HCT116 (cell line): ENCODE measurements at regions of chr12 and their contacts with region 1.

Region 1: GRCh38 chr12:76031537-76032073 is at the start of gene PHLDA1:
- DNase-seq: peak; percentile 77
- ATAC-seq: peak; percentile 70
- H3K4me3 ChIP-seq: peak within 1 kb of the TSS; percentile 75
- H3K27ac ChIP-seq: peak within 1 kb of the TSS; percentile 88
- H3K4me1 ChIP-seq: peaks cover 23 to 59% of the 10 kb centered on the region in 2 experiments
- H3K27me3 ChIP-seq: no peaks in the 10 kb centered on the region
- CTCF ChIP-seq: peak in 1 of 3 experiments; percentile 22; a peak in 1 of 6 replicates
- POLR2A ChIP-seq: peak; percentile 67
- RAD21 ChIP-seq: no peak; the same call in 1 of the 2 replicates
- total RNA-seq, gene PHLDA1: 231 TPM

Region 2: GRCh38 chr12:75766263-75767160 is 265.1 kb before region 1 on chr12:
- CTCF ChIA-PET with region 1: no interaction called
- POLR2A ChIA-PET with region 1: interaction called, 5 read pairs
- RAD21 ChIA-PET with region 1: no interaction called
- intact Hi-C with region 1: loop called (anchors 5 kb)
- DNase-seq: peak; percentile 88
- ATAC-seq: peak; percentile 77
- H3K4me3 ChIP-seq: no peak overlapping the region
- H3K27ac ChIP-seq: peak overlapping the region; percentile 100
- H3K4me1 ChIP-seq: peaks cover 72 to 86% of the 10 kb centered on the region in 2 experiments
- H3K27me3 ChIP-seq: no peaks in the 10 kb centered on the region
- CTCF ChIP-seq: no peak
- POLR2A ChIP-seq: no peak
- RAD21 ChIP-seq: peak; percentile 51

Region 3: GRCh38 chr12:75837700-75838099 is 193.9 kb before region 1 on chr12:
- CTCF ChIA-PET with region 1: no interaction called
- POLR2A ChIA-PET with region 1: no interaction called
- RAD21 ChIA-PET with region 1: no interaction called
- intact Hi-C with region 1: no loop called
- DNase-seq: no peak
- ATAC-seq: no peak
- H3K4me3 ChIP-seq: no peak overlapping the region
- H3K27ac ChIP-seq: no peak overlapping the region
- H3K4me1 ChIP-seq: peaks cover 14 to 17% of the 10 kb centered on the region in 2 experiments
- H3K27me3 ChIP-seq: no peaks in the 10 kb centered on the region
- CTCF ChIP-seq: no peak
- POLR2A ChIP-seq: no peak
- RAD21 ChIP-seq: no peak

Region 4: DNA sequence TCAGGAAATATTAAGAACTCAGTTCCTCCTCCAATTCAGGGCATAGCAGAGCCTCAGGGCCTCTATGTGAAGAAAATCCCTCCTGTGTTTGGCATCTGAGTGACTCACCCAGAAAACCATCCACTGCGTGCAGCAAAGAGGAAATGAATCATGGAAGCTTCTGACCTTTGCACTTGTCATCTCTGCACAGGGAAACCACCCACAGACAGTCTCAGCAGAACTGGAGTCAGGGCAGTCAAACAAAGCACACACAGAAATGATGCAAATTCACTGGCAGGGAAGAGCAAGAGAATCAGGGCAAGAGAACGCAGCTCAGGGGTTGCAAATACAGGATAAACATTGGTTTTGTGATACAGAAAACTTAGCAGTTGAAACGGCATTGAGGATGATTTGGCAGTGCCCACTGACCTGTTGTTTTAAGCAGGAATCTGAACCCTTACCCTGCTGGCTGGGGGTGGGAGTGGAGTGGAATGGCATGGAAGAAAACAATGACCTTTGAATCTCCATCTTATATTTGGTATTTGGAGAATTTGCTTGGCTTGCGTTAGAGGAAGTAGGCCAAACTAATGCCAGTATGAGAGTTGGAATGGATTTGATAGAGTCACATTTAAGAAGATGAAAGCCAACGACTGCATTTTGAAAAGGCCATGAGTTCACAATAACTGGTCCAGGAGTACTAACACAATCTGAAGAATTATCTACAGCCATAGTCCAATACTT is 53.5 kb before region 1 on chr12:
- CTCF ChIA-PET with region 1: no interaction called
- POLR2A ChIA-PET with region 1: interaction called, 23 read pairs
- RAD21 ChIA-PET with region 1: no interaction called
- intact Hi-C with region 1: no loop called
- DNase-seq: peak; percentile 94
- ATAC-seq: peak; percentile 80
- H3K4me3 ChIP-seq: no peak overlapping the region
- H3K27ac ChIP-seq: peak overlapping the region; percentile 98
- H3K4me1 ChIP-seq: peaks cover 70 to 89% of the 10 kb centered on the region in 2 experiments
- H3K27me3 ChIP-seq: no peaks in the 10 kb centered on the region
- CTCF ChIP-seq: 0 out of 6 replicates have a peak, but pooled peaks of 1 of the 3 experiments have one; percentile 3
- POLR2A ChIP-seq: no peak
- RAD21 ChIP-seq: peak; percentile 38

Region 5: DNA sequence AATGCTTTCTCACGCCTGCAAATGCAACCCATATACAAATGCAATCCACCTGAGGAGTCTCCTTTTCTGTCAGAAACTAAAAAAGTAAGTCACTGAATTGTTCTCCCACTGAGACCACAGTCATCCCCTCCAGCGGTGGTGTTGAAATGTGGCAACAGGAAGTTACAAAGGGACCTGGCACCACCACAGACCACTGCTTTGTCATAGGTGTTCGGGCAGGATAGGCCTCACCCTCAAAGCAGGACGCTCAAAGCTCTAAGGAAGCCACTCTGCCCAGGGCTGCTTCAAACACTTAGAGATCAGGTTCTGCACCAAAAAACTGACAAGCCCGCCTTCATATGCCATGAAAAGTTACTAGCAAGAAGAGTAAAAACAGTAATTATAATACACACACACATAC is 11.3 kb before region 1 on chr12:
- CTCF ChIA-PET with region 1: no interaction called
- POLR2A ChIA-PET with region 1: no interaction called
- RAD21 ChIA-PET with region 1: no interaction called
- intact Hi-C with region 1: no loop called
- DNase-seq: peak; percentile 81
- ATAC-seq: peak; percentile 72
- H3K4me3 ChIP-seq: no peak overlapping the region
- H3K27ac ChIP-seq: peak overlapping the region; percentile 88
- H3K4me1 ChIP-seq: peaks cover 55 to 87% of the 10 kb centered on the region in 2 experiments
- H3K27me3 ChIP-seq: no peaks in the 10 kb centered on the region
- CTCF ChIP-seq: no peak
- POLR2A ChIP-seq: no peak
- RAD21 ChIP-seq: peak; percentile 13; the same call in 1 of the 2 replicates

Region 6: GRCh38 chr12:76480796-76481195 is 449.2 kb after region 1 on chr12:
- CTCF ChIA-PET with region 1: no interaction called
- POLR2A ChIA-PET with region 1: no interaction called
- RAD21 ChIA-PET with region 1: no interaction called
- intact Hi-C with region 1: no loop called
- DNase-seq: no peak
- ATAC-seq: no peak
- H3K4me3 ChIP-seq: no peak overlapping the region
- H3K27ac ChIP-seq: no peak overlapping the region
- H3K4me1 ChIP-seq: no peaks in the 10 kb centered on the region
- H3K27me3 ChIP-seq: no peaks in the 10 kb centered on the region
- CTCF ChIP-seq: no peak
- POLR2A ChIP-seq: no peak
- RAD21 ChIP-seq: no peak